ENCODE measurements at regions of chr11 and their contacts with region 1.

Region 1: GRCh38 chr11:60951899-60952741 is at the start of gene SLC15A3:
- DNase-seq: peak; percentile 91
- ATAC-seq: peak; percentile 88
- H3K4me3 ChIP-seq: peak within 1 kb of the TSS; percentile 53 to 99 (median 81)
- H3K4me3 Mint-ChIP-seq: peak within 1 kb of the TSS; percentile 90
- H3K27ac ChIP-seq: peak within 1 kb of the TSS; percentile 91 to 98
- H3K27ac Mint-ChIP-seq: peak within 1 kb of the TSS; percentile 94
- H3K4me1 ChIP-seq: peaks cover 48 to 62% of the 10 kb centered on the region in 2 donors
- H3K4me1 Mint-ChIP-seq: peaks cover 55% of the 10 kb centered on the region
- H3K27me3 ChIP-seq: no peaks in the 10 kb centered on the region
- H3K27me3 Mint-ChIP-seq: no peaks in the 10 kb centered on the region
- CTCF ChIP-seq: no peak
- total RNA-seq, gene SLC15A3: 91.4 and 93.0 TPM in 2 replicates

Region 2: GRCh38 chr11:60810569-60810968 is 141.6 kb before region 1 on chr11:
- CTCF ChIA-PET with region 1: no interaction called
- POLR2A ChIA-PET with region 1: no interaction called
- intact Hi-C with region 1: no loop called
- DNase-seq: no peak
- ATAC-seq: no peak
- H3K4me3 ChIP-seq: no peak overlapping the region
- H3K4me3 Mint-ChIP-seq: no peak overlapping the region
- H3K27ac ChIP-seq: no peak overlapping the region
- H3K27ac Mint-ChIP-seq: no peak overlapping the region
- H3K4me1 ChIP-seq: no peaks in the 10 kb centered on the region
- H3K4me1 Mint-ChIP-seq: no peaks in the 10 kb centered on the region
- H3K27me3 ChIP-seq: no peaks in the 10 kb centered on the region
- H3K27me3 Mint-ChIP-seq: peaks cover 36% of the 10 kb centered on the region
- CTCF ChIP-seq: no peak

Region 3: DNA sequence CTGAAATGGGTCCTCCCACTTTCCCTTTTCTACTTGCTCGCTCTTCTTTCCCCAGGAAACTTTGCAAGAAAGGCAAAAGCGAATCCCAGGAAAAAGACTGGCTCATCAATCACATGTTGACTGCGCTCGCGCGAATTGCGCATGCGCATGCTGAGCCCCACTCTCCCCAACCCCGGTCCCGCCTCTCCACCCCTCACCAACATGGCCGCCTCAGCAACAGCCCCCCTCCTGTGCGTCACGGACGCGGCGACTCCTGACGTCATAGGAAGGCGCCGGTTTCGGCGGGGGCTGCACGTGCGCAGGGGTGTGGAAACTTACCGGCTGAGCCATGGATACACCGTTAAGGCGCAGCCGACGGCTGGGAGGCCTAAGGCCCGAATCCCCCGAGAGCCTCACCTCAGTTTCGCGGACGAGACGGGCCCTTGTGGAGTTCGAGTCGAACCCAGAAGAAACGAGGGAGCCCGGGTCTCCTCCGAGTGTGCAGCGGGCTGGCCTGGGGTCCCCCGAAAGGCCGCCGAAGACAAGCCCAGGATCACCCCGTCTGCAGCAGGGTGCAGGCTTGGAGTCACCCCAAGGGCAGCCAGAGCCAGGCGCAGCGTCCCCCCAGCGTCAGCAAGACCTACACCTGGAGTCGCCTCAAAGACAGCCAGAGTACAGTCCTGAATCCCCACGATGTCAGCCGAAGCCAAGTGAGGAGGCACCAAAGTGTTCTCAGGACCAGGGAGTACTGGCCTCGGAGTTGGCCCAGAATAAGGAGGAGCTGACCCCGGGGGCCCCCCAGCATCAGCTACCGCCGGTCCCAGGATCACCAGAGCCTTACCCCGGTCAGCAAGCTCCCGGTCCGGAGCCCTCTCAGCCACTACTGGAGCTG is 110.1 kb before region 1 on chr11 and contains the start of gene CCDC86:
- CTCF ChIA-PET with region 1: no interaction called
- POLR2A ChIA-PET with region 1: no interaction called
- intact Hi-C with region 1: loop called (anchors 5 kb)
- DNase-seq: peak; percentile 98
- ATAC-seq: peak; percentile 97
- H3K4me3 ChIP-seq: peak within 1 kb of the TSS; percentile 54 to 97 (median 88)
- H3K4me3 Mint-ChIP-seq: peak within 1 kb of the TSS; percentile 93
- H3K27ac ChIP-seq: peak within 1 kb of the TSS; percentile 49 to 81
- H3K27ac Mint-ChIP-seq: peak within 1 kb of the TSS; percentile 93
- H3K4me1 ChIP-seq: peaks cover 32 to 33% of the 10 kb centered on the region in 2 donors
- H3K4me1 Mint-ChIP-seq: peaks cover 48% of the 10 kb centered on the region
- H3K27me3 ChIP-seq: no peaks in the 10 kb centered on the region
- H3K27me3 Mint-ChIP-seq: no peaks in the 10 kb centered on the region
- CTCF ChIP-seq: no peak
- total RNA-seq, gene CCDC86: 9.5 and 10.5 TPM in 2 replicates

Region 4: GRCh38 chr11:60906132-60906972 is 45.8 kb before region 1 on chr11 and contains the start of gene PRPF19:
- CTCF ChIA-PET with region 1: no interaction called
- POLR2A ChIA-PET with region 1: interaction called, 8 read pairs
- intact Hi-C with region 1: loop called (anchors 2 kb)
- DNase-seq: peak; percentile 98
- ATAC-seq: peak; percentile 89
- H3K4me3 ChIP-seq: peak within 1 kb of the TSS; percentile 72 to 98 (median 81)
- H3K4me3 Mint-ChIP-seq: peak within 1 kb of the TSS; percentile 92
- H3K27ac ChIP-seq: peak within 1 kb of the TSS; percentile 80 to 83
- H3K27ac Mint-ChIP-seq: peak within 1 kb of the TSS; percentile 97
- H3K4me1 ChIP-seq: peaks cover 47 to 51% of the 10 kb centered on the region in 2 donors
- H3K4me1 Mint-ChIP-seq: peaks cover 65% of the 10 kb centered on the region
- H3K27me3 ChIP-seq: no peaks in the 10 kb centered on the region
- H3K27me3 Mint-ChIP-seq: no peaks in the 10 kb centered on the region
- CTCF ChIP-seq: no peak
- total RNA-seq, gene PRPF19: 80.4 and 89.9 TPM in 2 replicates

Region 5: DNA sequence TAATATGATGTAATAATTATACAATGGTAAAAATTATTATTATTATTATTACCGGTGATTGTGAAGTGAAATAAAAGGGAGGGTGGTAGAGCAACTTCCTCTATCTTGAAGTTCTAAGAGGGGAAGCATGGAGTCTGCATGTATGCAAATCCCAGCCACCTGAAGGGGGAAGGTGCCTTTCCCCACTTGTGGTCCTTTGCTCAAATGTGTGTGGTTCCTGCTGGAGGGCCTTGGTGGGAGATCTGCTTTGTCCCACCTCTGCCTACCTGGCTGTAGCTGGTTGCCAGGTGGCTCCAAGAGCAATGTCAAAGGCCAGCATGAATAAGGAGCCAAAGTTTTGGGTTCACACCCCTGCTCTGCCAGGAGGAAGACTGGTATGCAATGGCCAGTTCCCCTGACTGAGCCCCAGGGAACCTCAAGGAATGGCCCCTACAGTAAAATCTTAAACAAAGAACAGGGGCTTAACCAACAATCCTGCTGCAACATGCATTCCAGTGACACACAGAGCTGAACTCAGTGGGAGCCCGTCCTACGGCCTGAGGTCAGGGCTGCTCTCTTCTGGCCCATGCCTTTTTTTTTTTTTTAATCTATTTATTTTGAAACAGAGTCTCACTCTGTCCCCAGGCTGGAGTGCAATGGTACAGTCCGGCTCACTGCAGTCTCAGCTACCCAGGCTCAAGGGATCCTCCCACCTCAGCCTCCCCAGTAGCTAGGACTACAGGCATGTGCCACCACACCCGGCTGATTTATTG is 19.3 kb before region 1 on chr11:
- CTCF ChIA-PET with region 1: no interaction called
- POLR2A ChIA-PET with region 1: interaction called, 14 read pairs
- intact Hi-C with region 1: loop called (anchors 1 kb)
- DNase-seq: peak; percentile 80
- ATAC-seq: peak; percentile 52
- H3K4me3 ChIP-seq: peak overlapping the region in 1 of 5 experiments; percentile 56
- H3K4me3 Mint-ChIP-seq: peak overlapping the region; percentile 74
- H3K27ac ChIP-seq: peak overlapping the region; percentile 72 to 90
- H3K27ac Mint-ChIP-seq: peak overlapping the region; percentile 91
- H3K4me1 ChIP-seq: peaks cover 26 to 44% of the 10 kb centered on the region in 2 donors
- H3K4me1 Mint-ChIP-seq: peaks cover 46% of the 10 kb centered on the region
- H3K27me3 ChIP-seq: no peaks in the 10 kb centered on the region
- H3K27me3 Mint-ChIP-seq: no peaks in the 10 kb centered on the region
- CTCF ChIP-seq: no peak

Region 6: GRCh38 chr11:61776551-61777075 is 824.5 kb after region 1 on chr11:
- CTCF ChIA-PET with region 1: no interaction called
- POLR2A ChIA-PET with region 1: no interaction called
- intact Hi-C with region 1: no loop called
- DNase-seq: peak; percentile 56
- ATAC-seq: peak; percentile 42
- H3K4me3 ChIP-seq: no peak overlapping the region
- H3K4me3 Mint-ChIP-seq: peak overlapping the region; percentile 73
- H3K27ac ChIP-seq: no peak overlapping the region
- H3K27ac Mint-ChIP-seq: no peak overlapping the region
- H3K4me1 ChIP-seq: peaks cover 13 to 15% of the 10 kb centered on the region in 2 donors
- H3K4me1 Mint-ChIP-seq: peaks cover 17% of the 10 kb centered on the region
- H3K27me3 ChIP-seq: peaks cover 0 to 8% (median 0%) of the 10 kb centered on the region in 4 experiments
- H3K27me3 Mint-ChIP-seq: peaks cover 12% of the 10 kb centered on the region
- CTCF ChIP-seq: peak; percentile 71

Measured in B cell (primary cell).